PC-3 (cell line): ENCODE measurements at regions of chr16 and their contacts with region 1.

Region 1: GRCh38 chr16:21300309-21301167 is 22.4 kb upstream of the CRYM start:
- DNase-seq: peak; percentile 98
- ATAC-seq: peak; percentile 74
- H3K4me3 ChIP-seq: peak overlapping the region; percentile 81
- H3K27ac ChIP-seq: peak overlapping the region; percentile 75
- H3K4me1 ChIP-seq: peaks cover 15% of the 10 kb centered on the region
- H3K27me3 ChIP-seq: no peaks in the 10 kb centered on the region
- CTCF ChIP-seq: peak; percentile 86

Region 2: GRCh38 chr16:21023509-21024202 is 276.9 kb before region 1 on chr16:
- CTCF ChIA-PET with region 1: no interaction called
- POLR2A ChIA-PET with region 1: no interaction called
- intact Hi-C with region 1: no loop called
- DNase-seq: no peak
- ATAC-seq: no peak
- H3K4me3 ChIP-seq: no peak overlapping the region
- H3K27ac ChIP-seq: no peak overlapping the region
- H3K4me1 ChIP-seq: no peaks in the 10 kb centered on the region
- H3K27me3 ChIP-seq: no peaks in the 10 kb centered on the region
- CTCF ChIP-seq: no peak

Region 3: GRCh38 chr16:21184834-21185233 is 115.7 kb before region 1 on chr16:
- CTCF ChIA-PET with region 1: interaction called, 9 read pairs
- POLR2A ChIA-PET with region 1: no interaction called
- intact Hi-C with region 1: loop called (anchors 5 kb)
- DNase-seq: no peak
- ATAC-seq: no peak
- H3K4me3 ChIP-seq: no peak overlapping the region
- H3K27ac ChIP-seq: no peak overlapping the region
- H3K4me1 ChIP-seq: peaks cover 11% of the 10 kb centered on the region
- H3K27me3 ChIP-seq: no peaks in the 10 kb centered on the region
- CTCF ChIP-seq: no peak

Region 4: DNA sequence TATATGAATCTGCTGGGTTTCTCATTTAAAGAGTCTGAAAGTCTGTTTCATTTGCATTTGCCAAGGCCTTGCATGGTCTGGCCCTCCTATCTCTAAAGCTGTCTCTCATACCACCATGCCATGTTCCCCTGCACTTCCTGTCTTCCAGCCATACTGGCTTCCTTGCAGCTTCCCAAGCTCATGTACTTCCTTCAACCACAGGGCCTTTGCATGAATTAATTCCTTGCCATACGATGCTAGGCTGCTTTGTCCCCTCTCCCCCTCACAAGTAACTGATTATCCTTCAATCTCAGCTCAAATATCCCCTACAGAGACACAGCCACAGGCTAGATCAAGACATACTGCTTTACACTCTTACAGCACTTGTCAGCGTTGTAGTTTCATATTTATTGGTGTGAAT is 28.3 kb before region 1 on chr16:
- CTCF ChIA-PET with region 1: interaction called, 11 read pairs
- POLR2A ChIA-PET with region 1: no interaction called
- intact Hi-C with region 1: no loop called
- DNase-seq: no peak
- ATAC-seq: no peak
- H3K4me3 ChIP-seq: no peak overlapping the region
- H3K27ac ChIP-seq: no peak overlapping the region
- H3K4me1 ChIP-seq: no peaks in the 10 kb centered on the region
- H3K27me3 ChIP-seq: peaks cover 25% of the 10 kb centered on the region
- CTCF ChIP-seq: no peak

Region 5: DNA sequence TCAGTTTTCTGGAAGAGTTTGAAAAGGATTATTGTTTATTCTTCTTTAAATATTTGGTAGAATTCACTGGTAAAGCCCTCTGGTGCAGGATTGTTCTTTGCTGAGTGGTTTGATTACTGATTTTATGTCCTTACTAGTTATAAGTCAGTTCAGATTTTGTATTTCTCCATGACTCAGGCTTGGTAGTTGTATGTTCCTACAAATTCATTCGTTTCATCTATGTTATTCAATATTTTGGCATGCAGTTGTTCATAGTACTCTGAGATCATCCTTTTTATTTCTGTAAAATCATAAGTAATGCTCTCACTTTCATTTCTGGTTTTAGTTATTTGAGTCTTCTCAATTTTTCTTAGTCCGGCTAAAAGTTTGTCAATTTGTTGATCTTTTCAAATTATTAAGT is 35.7 kb after region 1 on chr16:
- CTCF ChIA-PET with region 1: no interaction called
- POLR2A ChIA-PET with region 1: no interaction called
- intact Hi-C with region 1: no loop called
- DNase-seq: no peak
- ATAC-seq: no peak
- H3K4me3 ChIP-seq: no peak overlapping the region
- H3K27ac ChIP-seq: no peak overlapping the region
- H3K4me1 ChIP-seq: no peaks in the 10 kb centered on the region
- H3K27me3 ChIP-seq: no peaks in the 10 kb centered on the region
- CTCF ChIP-seq: no peak